ENCODE measurements at regions of chr12 and their contacts with region 1.

Region 1: GRCh38 chr12:50257686-50258551 is 25.4 kb downstream of the LIMA1 start:
- DNase-seq: no peak
- ATAC-seq: no peak
- H3K4me3 ChIP-seq: no peak overlapping the region
- H3K27ac ChIP-seq: no peak overlapping the region
- H3K4me1 ChIP-seq: peaks cover 20% of the 10 kb centered on the region
- H3K27me3 ChIP-seq: no peaks in the 10 kb centered on the region
- CTCF ChIP-seq: no peak
- EP300 ChIP-seq: no peak
- POLR2A ChIP-seq: no peak
- RAD21 ChIP-seq: no peak

Region 2: DNA sequence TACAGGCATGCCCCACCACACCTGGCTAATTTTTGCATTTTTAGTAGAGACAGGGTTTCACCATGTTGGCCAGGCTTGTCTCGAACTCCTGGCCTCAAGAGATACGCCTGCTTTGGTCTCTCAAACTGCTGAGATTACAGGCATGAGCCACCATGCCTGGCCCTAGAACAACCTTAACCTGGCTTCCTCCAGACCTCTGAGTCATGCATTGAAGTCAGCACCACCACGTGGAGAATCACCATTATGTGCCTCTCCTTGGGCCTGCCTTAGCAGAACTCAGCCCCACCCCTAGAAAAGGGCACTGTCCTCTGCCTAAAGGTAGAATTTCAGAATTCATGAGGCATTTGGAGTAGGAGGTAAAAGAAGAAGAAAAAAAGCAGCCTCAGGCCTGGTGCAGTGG is 23.6 kb before region 1 on chr12:
- CTCF ChIA-PET with region 1: interaction called, 3 read pairs
- POLR2A ChIA-PET with region 1: interaction called, 3 read pairs
- RAD21 ChIA-PET with region 1: interaction called, 7 read pairs
- SMC1A ChIA-PET with region 1: interaction called, 18 read pairs
- in situ Hi-C with region 1: no loop called
- intact Hi-C with region 1: no loop called
- DNase-seq: no peak
- ATAC-seq: peak; percentile 76
- H3K4me3 ChIP-seq: no peak overlapping the region
- H3K27ac ChIP-seq: no peak overlapping the region
- H3K4me1 ChIP-seq: no peaks in the 10 kb centered on the region
- H3K27me3 ChIP-seq: no peaks in the 10 kb centered on the region
- CTCF ChIP-seq: no peak
- EP300 ChIP-seq: no peak
- POLR2A ChIP-seq: no peak
- RAD21 ChIP-seq: no peak

Region 3: DNA sequence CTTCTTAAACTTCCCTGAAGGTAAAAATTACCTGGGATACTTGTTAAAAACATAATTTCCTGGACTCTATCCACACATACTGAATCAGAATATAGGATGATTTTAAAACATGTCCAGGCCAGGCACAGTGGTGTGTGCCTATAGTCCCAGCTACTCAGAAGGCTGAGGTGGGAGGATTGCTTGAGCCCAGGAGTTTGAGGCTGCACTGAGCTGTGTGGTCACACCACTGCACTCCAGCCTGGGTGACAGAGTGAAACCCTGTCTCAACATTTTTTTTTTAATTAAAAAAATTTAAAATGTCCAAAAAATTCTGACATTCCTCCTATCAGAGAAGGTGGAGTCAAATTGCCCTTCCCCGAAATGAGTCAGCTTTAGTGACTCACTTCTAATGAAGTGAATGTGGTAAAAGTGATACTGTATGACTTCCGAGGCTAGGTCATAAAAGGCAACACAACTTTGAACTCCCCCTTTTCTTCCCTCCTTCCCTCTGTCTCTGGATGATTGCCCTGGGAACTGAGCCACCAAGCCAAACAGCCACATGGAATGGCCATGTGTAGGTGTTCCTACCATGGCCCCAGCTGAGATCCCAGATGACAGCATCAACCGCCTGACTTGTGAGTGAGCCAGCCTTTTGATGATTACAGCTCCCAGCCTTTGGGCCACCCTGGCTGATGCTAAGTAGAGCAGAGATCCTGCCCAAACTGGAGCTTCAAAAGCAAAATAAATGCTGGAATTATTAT is 10.9 kb before region 1 on chr12:
- CTCF ChIA-PET with region 1: interaction called, 6 read pairs
- POLR2A ChIA-PET with region 1: interaction called, 7 read pairs
- RAD21 ChIA-PET with region 1: interaction called, 14 read pairs
- SMC1A ChIA-PET with region 1: interaction called, 6 read pairs
- in situ Hi-C with region 1: no loop called
- intact Hi-C with region 1: no loop called
- DNase-seq: peak; percentile 62
- ATAC-seq: peak; percentile 80
- H3K4me3 ChIP-seq: peak overlapping the region; percentile 5; the same call in 1 of the 2 replicates
- H3K27ac ChIP-seq: peak overlapping the region; percentile 83
- H3K4me1 ChIP-seq: peaks cover 38% of the 10 kb centered on the region
- H3K27me3 ChIP-seq: no peaks in the 10 kb centered on the region
- CTCF ChIP-seq: no peak
- EP300 ChIP-seq: peak in 1 of 2 experiments; percentile 65; a peak in 1 of 4 replicates
- POLR2A ChIP-seq: no peak
- RAD21 ChIP-seq: no peak

Region 4: GRCh38 chr12:50275556-50275955 is 17.6 kb after region 1 on chr12:
- CTCF ChIA-PET with region 1: interaction called, 13 read pairs
- POLR2A ChIA-PET with region 1: interaction called, 6 read pairs
- RAD21 ChIA-PET with region 1: interaction called, 3 read pairs
- SMC1A ChIA-PET with region 1: interaction called, 5 read pairs
- in situ Hi-C with region 1: no loop called
- intact Hi-C with region 1: no loop called
- DNase-seq: no peak
- ATAC-seq: no peak
- H3K4me3 ChIP-seq: no peak overlapping the region
- H3K27ac ChIP-seq: no peak overlapping the region
- H3K4me1 ChIP-seq: no peaks in the 10 kb centered on the region
- H3K27me3 ChIP-seq: no peaks in the 10 kb centered on the region
- CTCF ChIP-seq: no peak
- EP300 ChIP-seq: no peak
- POLR2A ChIP-seq: no peak
- RAD21 ChIP-seq: no peak

Region 5: DNA sequence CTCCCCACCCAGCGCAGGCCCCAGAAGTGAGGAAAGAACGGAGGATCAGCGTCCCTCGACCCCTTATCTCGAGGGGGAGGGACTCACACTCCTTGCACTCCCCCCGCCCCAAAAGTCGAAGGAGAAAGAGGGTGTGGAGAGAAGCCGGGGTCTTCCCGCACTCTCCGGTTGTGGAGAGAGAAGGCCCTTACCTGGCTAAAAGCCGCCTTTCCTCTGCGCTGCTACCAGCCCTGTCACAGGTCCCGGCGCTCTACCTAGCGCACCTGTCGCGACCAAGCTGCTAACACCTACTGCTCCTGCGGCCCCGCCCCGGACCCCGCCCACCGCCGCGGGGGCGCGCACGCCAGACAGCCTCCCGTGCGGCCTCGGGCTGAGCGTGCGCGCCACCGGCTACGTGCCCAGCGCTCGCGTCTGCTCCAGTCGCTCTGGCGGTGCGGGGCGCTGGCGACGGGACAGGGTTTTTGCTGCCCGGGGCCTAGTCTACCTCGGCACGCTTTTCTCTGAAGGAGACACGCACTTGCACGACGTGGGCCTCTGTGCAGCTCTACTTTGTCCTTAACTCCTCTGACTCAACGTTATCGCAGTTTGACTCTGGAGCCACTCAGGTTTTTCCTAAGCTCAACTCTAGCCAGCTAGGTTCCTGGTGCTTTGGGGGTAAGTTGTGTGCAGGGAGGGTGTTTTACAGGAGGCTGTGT is 25.5 kb after region 1 on chr12 and contains the start of gene LIMA1:
- CTCF ChIA-PET with region 1: interaction called, 18 read pairs
- POLR2A ChIA-PET with region 1: interaction called, 14 read pairs
- RAD21 ChIA-PET with region 1: interaction called, 16 read pairs
- SMC1A ChIA-PET with region 1: interaction called, 19 read pairs
- in situ Hi-C with region 1: no loop called
- intact Hi-C with region 1: no loop called
- DNase-seq: peak; percentile 37
- ATAC-seq: peak; percentile 98
- H3K4me3 ChIP-seq: peak within 1 kb of the TSS; percentile 83
- H3K27ac ChIP-seq: peak within 1 kb of the TSS; percentile 66
- H3K4me1 ChIP-seq: peaks cover 10% of the 10 kb centered on the region
- H3K27me3 ChIP-seq: peaks cover 0 to 3% of the 10 kb centered on the region in 2 experiments; a peak in 2 of 4 replicates
- CTCF ChIP-seq: peak; percentile 19 to 37 (median 23); a peak in 2 of 6 replicates
- EP300 ChIP-seq: no peak
- POLR2A ChIP-seq: peak; percentile 93
- RAD21 ChIP-seq: peak; percentile 31
- polyA plus RNA-seq, gene LIMA1: 56.6 to 58.2 TPM

Region 6: GRCh38 chr12:50314629-50315312 is 56.9 kb after region 1 on chr12:
- CTCF ChIA-PET with region 1: interaction called, 7 read pairs
- POLR2A ChIA-PET with region 1: no interaction called
- RAD21 ChIA-PET with region 1: interaction called, 15 read pairs
- SMC1A ChIA-PET with region 1: interaction called, 6 read pairs
- in situ Hi-C with region 1: no loop called
- intact Hi-C with region 1: no loop called
- DNase-seq: no peak
- ATAC-seq: peak; percentile 62
- H3K4me3 ChIP-seq: no peak overlapping the region
- H3K27ac ChIP-seq: no peak overlapping the region
- H3K4me1 ChIP-seq: no peaks in the 10 kb centered on the region
- H3K27me3 ChIP-seq: no peaks in the 10 kb centered on the region
- CTCF ChIP-seq: peak; percentile 44 to 63 (median 51); a peak in 5 of 6 replicates
- EP300 ChIP-seq: no peak
- POLR2A ChIP-seq: no peak
- RAD21 ChIP-seq: peak; percentile 83

Region 7: DNA sequence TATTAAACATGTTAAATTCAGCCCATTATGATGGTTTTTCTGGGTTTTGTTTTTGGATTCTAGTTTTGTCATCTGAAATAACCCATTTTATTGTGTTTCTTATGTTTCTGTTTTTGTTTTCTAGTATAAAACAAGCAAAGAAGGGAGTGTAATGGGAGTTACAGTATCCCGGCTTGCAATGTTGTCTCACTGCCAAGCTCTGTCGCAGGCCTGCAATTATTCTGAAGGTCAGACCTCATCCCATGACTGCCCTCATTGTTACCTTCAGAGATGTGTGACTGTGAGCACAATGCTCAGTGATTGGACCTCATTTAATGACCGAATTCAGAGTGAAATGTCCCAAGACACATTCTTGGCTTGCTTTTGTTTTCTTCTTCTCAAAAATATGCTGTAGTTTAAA is 433.0 kb after region 1 on chr12:
- CTCF ChIA-PET with region 1: no interaction called
- POLR2A ChIA-PET with region 1: no interaction called
- RAD21 ChIA-PET with region 1: no interaction called
- SMC1A ChIA-PET with region 1: no interaction called
- in situ Hi-C with region 1: no loop called
- intact Hi-C with region 1: no loop called
- DNase-seq: no peak
- ATAC-seq: no peak
- H3K4me3 ChIP-seq: no peak overlapping the region
- H3K27ac ChIP-seq: no peak overlapping the region
- H3K4me1 ChIP-seq: no peaks in the 10 kb centered on the region
- H3K27me3 ChIP-seq: no peaks in the 10 kb centered on the region
- CTCF ChIP-seq: no peak
- EP300 ChIP-seq: no peak
- POLR2A ChIP-seq: no peak
- RAD21 ChIP-seq: no peak

Measured in GM12878 (cell line).